GM12878 (cell line): ENCODE measurements at regions of chr19 and their contacts with region 1.

Region 1: DNA sequence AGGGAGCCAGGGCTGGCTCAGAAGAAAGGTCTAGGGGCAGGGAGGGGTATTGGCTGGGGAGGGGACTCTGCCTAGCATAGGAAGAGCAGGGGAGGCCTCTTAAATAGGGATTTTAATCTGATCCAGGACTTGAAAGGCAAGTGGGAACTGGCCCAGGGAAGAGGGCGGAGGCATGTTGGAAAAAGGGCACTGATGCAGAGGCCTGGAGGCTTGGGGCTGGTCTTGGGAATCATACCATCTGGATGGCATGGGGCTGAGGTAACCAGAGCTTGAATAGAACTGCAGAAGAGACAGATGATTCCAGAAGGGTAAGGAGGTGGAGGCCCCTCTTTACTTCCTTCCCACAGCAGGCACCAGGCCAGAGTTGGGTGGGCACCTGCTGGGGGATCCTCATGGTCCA is 29.1 kb downstream of the CERS4 start:
- DNase-seq: no peak
- ATAC-seq: no peak
- H3K4me3 ChIP-seq: no peak overlapping the region
- H3K27ac ChIP-seq: no peak overlapping the region
- H3K4me1 ChIP-seq: peaks cover 13% of the 10 kb centered on the region
- H3K27me3 ChIP-seq: no peaks in the 10 kb centered on the region
- CTCF ChIP-seq: no peak
- EP300 ChIP-seq: no peak
- POLR2A ChIP-seq: no peak
- RAD21 ChIP-seq: no peak

Region 2: DNA sequence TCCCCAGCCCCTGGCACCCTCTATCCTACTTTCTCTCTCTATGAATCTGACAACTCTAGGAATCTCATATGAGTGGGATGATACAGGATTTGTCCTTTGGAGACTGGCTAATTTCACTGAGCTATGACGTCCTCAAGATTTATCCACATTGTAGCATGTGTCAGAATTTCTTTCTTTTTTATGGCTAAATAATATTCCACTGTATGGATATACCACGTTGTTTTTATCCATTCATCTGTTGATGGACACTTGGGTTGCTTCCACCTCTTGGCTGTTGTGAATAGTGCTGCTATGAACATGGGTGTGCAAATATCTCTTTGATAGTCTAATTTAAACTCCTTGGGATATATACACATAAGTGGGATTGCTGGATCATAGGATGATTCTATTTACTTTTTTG is 920.1 kb before region 1 on chr19:
- CTCF ChIA-PET with region 1: no interaction called
- POLR2A ChIA-PET with region 1: interaction called, 10 read pairs
- RAD21 ChIA-PET with region 1: no interaction called
- SMC1A ChIA-PET with region 1: no interaction called
- in situ Hi-C with region 1: no loop called
- intact Hi-C with region 1: no loop called
- DNase-seq: no peak
- ATAC-seq: no peak
- H3K4me3 ChIP-seq: no peak overlapping the region
- H3K27ac ChIP-seq: no peak overlapping the region
- H3K4me1 ChIP-seq: no peaks in the 10 kb centered on the region
- H3K27me3 ChIP-seq: no peaks in the 10 kb centered on the region
- CTCF ChIP-seq: no peak
- EP300 ChIP-seq: no peak
- POLR2A ChIP-seq: no peak
- RAD21 ChIP-seq: no peak

Region 3: DNA sequence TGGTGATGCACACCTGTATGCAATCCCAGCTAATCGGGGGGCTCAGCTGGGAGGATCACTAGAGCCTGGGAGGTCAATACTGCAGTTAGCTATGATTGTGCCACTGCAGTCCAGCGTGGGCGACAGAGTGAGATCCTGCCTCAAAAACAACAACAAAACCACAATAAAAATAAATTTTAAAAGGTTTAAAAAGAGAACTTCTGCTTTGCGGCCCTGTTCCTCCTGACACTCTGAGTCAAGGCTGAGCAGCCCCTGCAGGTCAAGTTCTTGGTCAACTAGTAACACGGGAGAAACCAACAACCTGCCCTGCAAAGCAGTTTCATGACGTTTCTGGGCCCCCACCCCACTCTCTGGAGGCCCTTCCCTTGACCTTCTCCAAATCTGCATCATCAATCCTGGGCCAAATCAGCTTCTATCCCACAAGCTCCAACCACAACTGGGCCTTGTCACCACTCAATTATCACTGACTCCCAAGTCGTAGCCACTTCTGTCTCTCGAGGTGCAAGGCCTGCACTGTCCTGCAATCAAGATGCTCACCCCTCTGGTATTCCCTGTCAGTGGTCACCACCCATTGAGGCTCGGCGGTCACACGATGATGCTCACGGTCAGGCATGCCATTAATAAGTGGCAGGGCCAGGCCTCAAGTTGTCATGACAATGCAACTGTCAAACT is 240.3 kb before region 1 on chr19:
- CTCF ChIA-PET with region 1: no interaction called
- POLR2A ChIA-PET with region 1: no interaction called
- RAD21 ChIA-PET with region 1: no interaction called
- SMC1A ChIA-PET with region 1: no interaction called
- in situ Hi-C with region 1: no loop called
- intact Hi-C with region 1: no loop called
- DNase-seq: no peak
- ATAC-seq: no peak
- H3K4me3 ChIP-seq: no peak overlapping the region
- H3K27ac ChIP-seq: 0 out of 2 replicates have a peak overlapping the region, but pooled peaks have one; percentile 7
- H3K4me1 ChIP-seq: peaks cover 36% of the 10 kb centered on the region
- H3K27me3 ChIP-seq: no peaks in the 10 kb centered on the region
- CTCF ChIP-seq: no peak
- EP300 ChIP-seq: no peak
- POLR2A ChIP-seq: no peak
- RAD21 ChIP-seq: no peak